ENCODE measurements at regions of chr1 and their contacts with region 1.

Region 1: DNA sequence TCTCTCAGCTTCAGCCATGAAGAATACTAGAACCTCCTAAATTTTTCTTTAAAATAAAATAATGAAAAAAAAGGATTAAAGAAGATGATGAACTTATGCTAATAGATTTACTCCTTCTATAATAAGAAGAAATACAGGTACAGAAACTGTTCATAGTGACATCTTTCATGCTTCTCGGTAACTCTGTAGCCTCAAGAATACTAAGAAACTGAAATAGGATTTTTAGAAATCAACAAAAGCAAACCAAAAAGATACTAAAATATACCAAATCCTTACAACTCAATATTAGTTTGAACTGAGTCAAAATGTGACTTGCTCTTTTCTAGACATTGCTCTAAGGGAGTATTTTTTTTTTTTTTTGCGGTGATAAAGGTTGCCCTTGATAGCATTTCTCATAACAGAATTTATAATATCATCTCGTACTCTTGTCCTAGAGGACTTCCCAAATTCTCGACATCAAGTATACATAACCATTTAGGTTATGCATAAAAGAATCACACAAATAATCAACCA is 42.8 kb downstream of the ZZZ3 start:
- DNase-seq: no peak
- H3K4me3 ChIP-seq: no peak overlapping the region
- H3K27ac ChIP-seq: peak overlapping the region; percentile 7
- H3K4me1 ChIP-seq: peaks cover 10% of the 10 kb centered on the region
- H3K27me3 ChIP-seq: no peaks in the 10 kb centered on the region
- CTCF ChIP-seq: no peak

Region 2: DNA sequence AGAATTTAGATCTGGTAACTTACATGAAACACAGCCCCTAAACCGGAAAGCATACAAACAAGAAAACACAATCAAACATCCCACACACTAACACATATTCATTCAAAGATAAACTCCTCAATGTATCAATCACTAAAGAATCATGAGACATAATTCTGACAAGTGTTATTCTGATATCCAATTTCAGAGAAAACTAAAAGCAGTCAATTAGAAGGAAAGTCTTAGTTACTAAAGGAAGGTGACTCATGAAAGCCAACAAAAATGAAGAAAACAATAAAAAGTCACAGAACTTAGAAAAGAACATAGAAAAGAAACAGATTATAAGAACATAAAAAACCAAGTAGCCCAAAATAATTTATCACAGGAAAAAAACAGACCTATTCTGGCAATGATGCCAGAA is 14.4 kb before region 1 on chr1:
- CTCF ChIA-PET with region 1: no interaction called
- dilution Hi-C with region 1: no loop called
- in situ Hi-C with region 1: no loop called
- intact Hi-C with region 1: loop called (anchors 1 kb)
- DNase-seq: no peak
- H3K4me3 ChIP-seq: no peak overlapping the region
- H3K27ac ChIP-seq: no peak overlapping the region
- H3K4me1 ChIP-seq: no peaks in the 10 kb centered on the region
- H3K27me3 ChIP-seq: no peaks in the 10 kb centered on the region
- CTCF ChIP-seq: no peak

Measured in mammary epithelial cell (primary cell).